ENCODE measurements at regions of chr4 and their contacts with region 1.

Region 1: GRCh38 chr4:47717188-47717587 is 120.7 kb downstream of the CORIN start:
- DNase-seq: no peak
- ATAC-seq: no peak
- H3K4me3 ChIP-seq: no peak overlapping the region
- H3K4me3 Mint-ChIP-seq: no peak overlapping the region
- H3K27ac ChIP-seq: no peak overlapping the region
- H3K27ac Mint-ChIP-seq: no peak overlapping the region
- H3K4me1 ChIP-seq: no peaks in the 10 kb centered on the region
- H3K4me1 Mint-ChIP-seq: no peaks in the 10 kb centered on the region
- H3K27me3 ChIP-seq: no peaks in the 10 kb centered on the region
- H3K27me3 Mint-ChIP-seq: peaks cover 34% of the 10 kb centered on the region
- CTCF ChIP-seq: no peak

Region 2: GRCh38 chr4:47762376-47763266 is 45.4 kb after region 1 on chr4:
- CTCF ChIA-PET with region 1: no interaction called
- POLR2A ChIA-PET with region 1: interaction called, 3 read pairs
- intact Hi-C with region 1: loop called in 1 of 2 experiments (anchors 1 kb)
- DNase-seq: no peak
- ATAC-seq: no peak
- H3K4me3 ChIP-seq: no peak overlapping the region
- H3K4me3 Mint-ChIP-seq: no peak overlapping the region
- H3K27ac ChIP-seq: no peak overlapping the region
- H3K27ac Mint-ChIP-seq: no peak overlapping the region
- H3K4me1 ChIP-seq: no peaks in the 10 kb centered on the region
- H3K4me1 Mint-ChIP-seq: no peaks in the 10 kb centered on the region
- H3K27me3 ChIP-seq: no peaks in the 10 kb centered on the region
- H3K27me3 Mint-ChIP-seq: no peaks in the 10 kb centered on the region
- CTCF ChIP-seq: no peak